Mammary epithelial cell (primary cell): ENCODE measurements at regions of chr12 and their contacts with region 1.

Region 1: GRCh38 chr12:125114365-125115141 is 49.3 kb downstream of the AACS start:
- DNase-seq: no peak
- H3K4me3 ChIP-seq: no peak overlapping the region
- H3K27ac ChIP-seq: no peak overlapping the region
- H3K4me1 ChIP-seq: no peaks in the 10 kb centered on the region
- H3K27me3 ChIP-seq: no peaks in the 10 kb centered on the region
- CTCF ChIP-seq: no peak

Region 2: GRCh38 chr12:125013816-125014442 is 100.6 kb before region 1 on chr12:
- CTCF ChIA-PET with region 1: no interaction called
- dilution Hi-C with region 1: loop called (anchors 5 kb)
- in situ Hi-C with region 1: no loop called
- intact Hi-C with region 1: no loop called
- DNase-seq: no peak
- H3K4me3 ChIP-seq: no peak overlapping the region
- H3K27ac ChIP-seq: no peak overlapping the region
- H3K4me1 ChIP-seq: no peaks in the 10 kb centered on the region
- H3K27me3 ChIP-seq: no peaks in the 10 kb centered on the region
- CTCF ChIP-seq: no peak

Region 3: DNA sequence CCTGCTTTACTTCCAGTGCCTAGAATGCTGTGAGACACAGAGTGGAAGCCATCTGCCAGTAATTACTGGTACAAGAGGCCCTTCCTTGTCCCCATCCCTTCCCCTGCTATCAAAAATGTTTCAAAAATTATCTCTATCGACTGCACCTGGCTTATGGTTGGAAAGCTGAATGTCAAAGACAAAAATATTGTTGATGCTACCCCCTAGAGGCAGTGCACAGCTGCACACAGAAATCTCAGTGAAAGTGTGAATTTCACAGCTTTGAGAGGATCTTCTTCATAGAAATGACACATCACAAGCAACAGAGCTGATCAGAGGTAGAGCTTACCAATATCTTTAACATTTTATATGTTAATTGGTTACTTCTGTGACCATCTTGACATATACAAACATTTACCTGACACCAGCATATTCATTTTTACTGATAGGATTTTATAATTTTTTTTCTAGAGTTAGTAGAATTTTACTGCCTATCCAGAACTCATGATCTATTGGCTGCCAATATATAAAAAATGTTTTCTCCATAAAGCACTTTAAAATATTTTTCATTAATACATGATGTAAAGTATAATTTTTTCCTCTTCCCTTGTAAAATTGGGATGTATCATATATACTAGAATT is 88.7 kb after region 1 on chr12:
- CTCF ChIA-PET with region 1: no interaction called
- dilution Hi-C with region 1: loop called (anchors 5 kb)
- in situ Hi-C with region 1: no loop called
- intact Hi-C with region 1: no loop called
- DNase-seq: no peak
- H3K4me3 ChIP-seq: no peak overlapping the region
- H3K27ac ChIP-seq: no peak overlapping the region
- H3K4me1 ChIP-seq: no peaks in the 10 kb centered on the region
- H3K27me3 ChIP-seq: no peaks in the 10 kb centered on the region
- CTCF ChIP-seq: peak; percentile 57 to 66

Region 4: GRCh38 chr12:125296701-125297100 is 182.1 kb after region 1 on chr12:
- CTCF ChIA-PET with region 1: no interaction called
- dilution Hi-C with region 1: no loop called
- in situ Hi-C with region 1: no loop called
- intact Hi-C with region 1: no loop called
- DNase-seq: no peak
- H3K4me3 ChIP-seq: no peak overlapping the region
- H3K27ac ChIP-seq: no peak overlapping the region
- H3K4me1 ChIP-seq: no peaks in the 10 kb centered on the region
- H3K27me3 ChIP-seq: no peaks in the 10 kb centered on the region
- CTCF ChIP-seq: no peak